ENCODE measurements at regions of chr17 and their contacts with region 1.

Region 1: DNA sequence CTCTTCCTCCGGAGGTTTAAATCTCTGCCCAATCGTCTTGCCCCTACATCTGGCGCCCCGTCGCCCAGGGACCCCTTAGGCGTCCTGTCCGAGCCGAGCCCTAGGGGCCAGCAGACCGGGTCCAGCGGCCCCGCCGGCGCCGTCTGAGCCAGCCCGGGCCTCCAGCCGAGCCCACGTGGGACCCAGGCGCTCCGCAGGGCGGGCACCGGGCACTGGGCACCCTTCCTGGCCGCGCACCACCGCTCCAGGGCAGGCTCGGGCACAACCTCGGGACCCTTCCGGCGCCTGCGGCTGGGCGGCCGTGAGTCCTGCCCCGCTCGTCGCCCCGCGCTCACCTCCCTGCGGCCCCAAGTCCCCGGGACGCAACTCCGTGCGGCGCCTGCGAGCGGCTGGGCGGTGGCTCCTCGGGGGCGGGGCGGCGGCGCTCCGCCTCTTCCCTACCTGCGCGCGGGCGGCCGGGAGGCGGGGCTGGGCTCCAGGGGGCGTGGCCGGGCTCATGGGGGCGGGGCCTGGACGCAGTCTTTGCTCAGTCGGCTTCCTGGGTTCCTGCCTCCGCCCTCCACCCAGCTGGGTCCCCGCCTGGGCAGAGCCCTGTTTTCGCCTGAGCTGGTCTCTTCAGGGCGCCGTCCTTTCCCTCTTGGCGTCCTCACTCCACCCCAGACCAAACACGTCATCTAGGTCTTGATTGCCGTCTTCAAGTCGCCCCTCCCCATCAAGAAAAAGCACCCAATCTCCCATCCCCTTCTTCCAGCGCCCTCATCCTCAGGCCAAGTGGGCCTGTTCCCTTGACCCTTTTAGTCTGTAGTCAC is at the start of gene RHBDF2:
- DNase-seq: peak; percentile 79
- ATAC-seq: peak; percentile 70
- H3K4me3 ChIP-seq: peak within 1 kb of the TSS; percentile 90 to 99 (median 96)
- H3K27ac ChIP-seq: peak within 1 kb of the TSS; percentile 64
- H3K4me1 ChIP-seq: peaks cover 65% of the 10 kb centered on the region
- H3K27me3 ChIP-seq: no peaks in the 10 kb centered on the region; a peak in 1 of 5 replicates
- CTCF ChIP-seq: no peak; the same call in 1 of the 2 replicates
- EP300 ChIP-seq: 0 out of 4 replicates have a peak, but pooled peaks of 1 of the 2 experiments have one; percentile 17
- POLR2A ChIP-seq: peak; percentile 66 to 94; a peak in 3 of 4 replicates
- RAD21 ChIP-seq: peak; percentile 59
- total RNA-seq, gene RHBDF2: 4.2 and 7.8 TPM in 2 replicates

Region 2: DNA sequence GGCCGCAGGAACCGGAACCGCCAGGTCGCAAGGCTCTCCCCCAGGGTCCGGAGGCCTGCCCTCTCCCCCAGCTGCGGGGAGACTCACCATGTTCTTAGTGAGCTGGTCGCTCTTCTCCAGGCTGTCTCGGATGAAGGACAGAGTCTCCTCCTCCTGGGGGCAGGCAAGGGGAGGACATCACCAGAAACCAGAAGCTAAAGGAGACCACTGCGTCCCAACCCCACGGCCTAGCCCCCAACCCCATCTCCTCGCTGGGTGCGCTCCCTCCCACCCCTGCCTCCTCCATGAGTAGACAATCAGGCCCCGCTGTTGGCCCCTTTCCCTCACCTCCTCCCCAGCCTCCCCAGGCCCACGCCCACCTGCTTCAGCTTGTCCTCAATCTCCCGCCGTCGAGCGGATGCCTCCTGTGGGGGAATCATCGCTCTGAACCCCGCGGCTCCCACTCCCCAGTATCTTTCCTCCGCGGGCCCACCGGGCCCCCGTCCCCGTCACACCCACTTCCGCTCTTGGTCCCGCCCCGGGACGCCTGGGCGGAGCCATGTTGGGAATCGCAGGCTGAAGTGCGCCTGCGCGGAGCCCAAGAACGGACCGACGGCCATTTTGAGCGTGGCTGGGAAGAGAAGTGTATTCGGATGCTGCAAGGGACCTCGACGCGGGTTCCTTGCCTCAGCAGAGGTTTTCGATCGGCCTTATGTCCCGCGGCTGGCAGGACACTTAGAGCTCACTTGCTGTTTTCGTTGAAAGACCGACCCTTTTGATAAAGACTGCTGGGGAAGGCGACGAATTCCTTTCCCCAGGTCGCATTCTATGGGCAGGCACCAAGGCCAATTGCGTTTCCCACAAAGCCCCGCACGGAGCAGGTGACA is 397.7 kb before region 1 on chr17 and contains the start of gene EXOC7:
- CTCF ChIA-PET with region 1: no interaction called
- POLR2A ChIA-PET with region 1: no interaction called
- in situ Hi-C with region 1: no loop called
- intact Hi-C with region 1: no loop called
- DNase-seq: peak; percentile 92
- ATAC-seq: peak; percentile 84
- H3K4me3 ChIP-seq: peak within 1 kb of the TSS; percentile 78 to 87 (median 79)
- H3K27ac ChIP-seq: peak within 1 kb of the TSS; percentile 83
- H3K4me1 ChIP-seq: peaks cover 48% of the 10 kb centered on the region
- H3K27me3 ChIP-seq: no peaks in the 10 kb centered on the region; a peak in 1 of 5 replicates
- CTCF ChIP-seq: no peak
- EP300 ChIP-seq: peak; percentile 9 to 17; a peak in 1 of 4 replicates
- POLR2A ChIP-seq: peak; percentile 93 to 97
- RAD21 ChIP-seq: no peak
- total RNA-seq, gene EXOC7: 116 and 118 TPM in 2 replicates

Region 3: DNA sequence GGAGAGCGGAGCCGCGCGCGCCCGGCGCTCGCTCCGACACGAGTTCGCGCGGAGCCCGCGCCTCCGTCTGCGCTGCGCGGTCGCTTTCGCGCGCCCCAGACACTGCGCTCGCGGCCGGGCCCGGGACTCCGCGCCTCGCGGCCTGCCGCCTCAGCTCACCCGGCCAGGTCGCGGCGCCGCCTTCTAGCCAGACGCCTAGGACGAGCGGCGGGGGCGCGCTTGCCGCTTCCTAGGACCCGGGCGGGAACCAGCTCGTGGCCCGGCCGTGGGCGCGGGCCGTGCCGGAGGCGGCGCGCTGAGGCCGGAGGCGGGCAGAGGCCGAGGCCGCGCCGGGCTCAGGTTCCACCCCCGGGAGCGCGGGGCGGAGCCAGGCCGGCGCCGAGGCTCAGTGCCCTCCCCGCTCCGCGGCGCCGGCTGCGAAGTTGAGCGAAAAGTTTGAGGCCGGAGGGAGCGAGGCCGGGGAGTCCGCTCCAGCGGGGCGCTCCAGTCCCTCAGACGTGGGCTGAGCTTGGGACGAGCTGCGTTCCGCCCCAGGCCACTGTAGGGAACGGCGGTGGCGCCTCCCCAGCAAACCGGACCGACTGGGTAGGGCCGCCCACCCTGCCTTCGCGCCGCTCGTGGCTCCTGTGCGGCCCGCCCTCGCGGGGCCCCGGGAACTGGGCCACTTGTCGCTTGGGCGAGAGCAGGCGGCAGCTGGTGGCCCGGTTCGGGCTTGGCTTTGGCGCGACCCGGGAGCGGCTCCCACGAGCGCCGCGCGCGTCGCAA is 116.8 kb before region 1 on chr17 and contains the start of gene SPHK1:
- CTCF ChIA-PET with region 1: no interaction called
- POLR2A ChIA-PET with region 1: interaction called, 10 read pairs
- in situ Hi-C with region 1: no loop called
- intact Hi-C with region 1: no loop called
- DNase-seq: peak; percentile 74
- ATAC-seq: peak; percentile 49
- H3K4me3 ChIP-seq: peak within 1 kb of the TSS; percentile 72 to 90 (median 86)
- H3K27ac ChIP-seq: peak within 1 kb of the TSS; percentile 100
- H3K4me1 ChIP-seq: peaks cover 55% of the 10 kb centered on the region
- H3K27me3 ChIP-seq: no peaks in the 10 kb centered on the region; a peak in 1 of 5 replicates
- CTCF ChIP-seq: no peak; the same call in none of the 2 replicates
- EP300 ChIP-seq: 0 out of 4 replicates have a peak, but pooled peaks of 1 of the 2 experiments have one; percentile 3
- POLR2A ChIP-seq: peak in 1 of 2 experiments; percentile 92; a peak in 2 of 4 replicates
- RAD21 ChIP-seq: peak; percentile 65; the same call in 1 of the 2 replicates
- total RNA-seq, gene SPHK1: 111 and 160 TPM in 2 replicates

Region 4: DNA sequence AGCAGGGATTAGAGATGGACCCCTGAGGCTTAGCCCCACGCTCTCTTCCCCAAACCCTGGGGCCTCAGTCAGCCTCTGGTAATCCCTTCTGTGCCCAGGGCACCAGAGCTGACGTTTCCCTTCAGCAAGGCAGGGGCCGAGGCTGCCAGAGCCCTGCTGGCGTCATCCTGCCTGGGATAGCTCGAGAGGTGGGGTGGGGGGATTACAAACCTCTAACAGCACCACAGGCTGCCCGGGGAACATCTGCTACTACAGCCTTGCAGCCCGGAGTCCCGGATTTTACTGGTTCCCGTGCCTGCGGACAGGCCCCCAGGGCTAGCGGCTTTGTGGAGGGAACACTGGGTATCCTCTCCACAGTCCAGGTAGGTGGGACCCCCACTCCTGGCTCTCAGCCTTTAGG is 33.9 kb before region 1 on chr17 and contains the start of gene AANAT:
- CTCF ChIA-PET with region 1: interaction called, 86 read pairs
- POLR2A ChIA-PET with region 1: interaction called, 31 read pairs
- in situ Hi-C with region 1: loop called (anchors 5 kb)
- intact Hi-C with region 1: loop called (anchors 1 kb)
- DNase-seq: no peak
- ATAC-seq: no peak
- H3K4me3 ChIP-seq: 0 out of 6 replicates have a peak within 1 kb of the TSS, but pooled peaks of 1 of the 3 experiments have one; percentile 63
- H3K27ac ChIP-seq: no peak within 1 kb of the TSS
- H3K4me1 ChIP-seq: peaks cover 48% of the 10 kb centered on the region
- H3K27me3 ChIP-seq: peaks cover 2 to 21% of the 10 kb centered on the region in 2 experiments; a peak in 3 of 5 replicates
- CTCF ChIP-seq: no peak
- EP300 ChIP-seq: no peak
- POLR2A ChIP-seq: no peak
- RAD21 ChIP-seq: no peak
- total RNA-seq, gene AANAT: not detected in 2 replicates

Region 5: GRCh38 chr17:76511668-76512365 is 10.6 kb after region 1 on chr17:
- CTCF ChIA-PET with region 1: no interaction called
- POLR2A ChIA-PET with region 1: interaction called, 11 read pairs
- in situ Hi-C with region 1: no loop called
- intact Hi-C with region 1: no loop called
- DNase-seq: no peak
- ATAC-seq: no peak
- H3K4me3 ChIP-seq: no peak overlapping the region
- H3K27ac ChIP-seq: no peak overlapping the region
- H3K4me1 ChIP-seq: peaks cover 61% of the 10 kb centered on the region
- H3K27me3 ChIP-seq: peaks cover 6 to 45% of the 10 kb centered on the region in 2 experiments; a peak in 4 of 5 replicates
- CTCF ChIP-seq: no peak
- EP300 ChIP-seq: no peak
- POLR2A ChIP-seq: no peak
- RAD21 ChIP-seq: no peak

Region 6: GRCh38 chr17:76547184-76547641 is 46.0 kb after region 1 on chr17:
- CTCF ChIA-PET with region 1: interaction called, 6 read pairs
- POLR2A ChIA-PET with region 1: interaction called, 34 read pairs
- in situ Hi-C with region 1: no loop called
- intact Hi-C with region 1: no loop called
- DNase-seq: peak; percentile 74
- ATAC-seq: peak; percentile 73
- H3K4me3 ChIP-seq: peak overlapping the region in 1 of 3 experiments; percentile 66; a peak in 1 of 6 replicates
- H3K27ac ChIP-seq: no peak overlapping the region
- H3K4me1 ChIP-seq: peaks cover 62% of the 10 kb centered on the region
- H3K27me3 ChIP-seq: no peaks in the 10 kb centered on the region
- CTCF ChIP-seq: peak; percentile 95
- EP300 ChIP-seq: no peak
- POLR2A ChIP-seq: no peak
- RAD21 ChIP-seq: peak; percentile 97

Measured in HepG2 (cell line).